IMR-90 (cell line): ENCODE measurements at regions of chrX and their contacts with region 1.

Region 1: DNA sequence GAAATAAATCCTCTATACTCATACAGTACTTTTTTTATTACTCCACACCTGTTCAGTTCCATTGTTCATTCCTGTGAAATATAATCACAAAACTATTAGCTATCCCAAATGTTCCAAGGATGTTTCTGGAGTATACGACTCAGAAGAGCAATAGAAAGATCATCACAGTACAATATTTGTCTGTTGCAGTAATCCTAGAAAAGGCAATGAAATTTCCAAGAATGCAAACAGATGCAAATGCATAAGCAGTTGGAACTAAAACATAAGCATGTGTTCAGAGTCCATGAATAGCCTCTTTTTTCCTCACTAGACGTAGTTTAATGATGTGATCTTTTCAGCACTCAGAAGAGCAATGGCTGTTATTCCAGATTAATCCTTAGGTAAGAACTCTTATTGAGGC is 55.2 kb downstream of the RTL3 start:
- DNase-seq: no peak
- ATAC-seq: no peak
- H3K4me3 ChIP-seq: no peak overlapping the region
- H3K27ac ChIP-seq: no peak overlapping the region
- H3K4me1 ChIP-seq: no peaks in the 10 kb centered on the region
- H3K27me3 ChIP-seq: no peaks in the 10 kb centered on the region
- CTCF ChIP-seq: no peak
- POLR2A ChIP-seq: no peak
- RAD21 ChIP-seq: no peak

Region 2: GRCh38 chrX:78665342-78665741 is 61.4 kb after region 1 on chrX:
- CTCF ChIA-PET with region 1: no interaction called
- POLR2A ChIA-PET with region 1: no interaction called
- dilution Hi-C with region 1: no loop called
- in situ Hi-C with region 1: no loop called
- intact Hi-C with region 1: loop called (anchors 10 kb)
- DNase-seq: no peak
- ATAC-seq: no peak
- H3K4me3 ChIP-seq: no peak overlapping the region
- H3K27ac ChIP-seq: no peak overlapping the region
- H3K4me1 ChIP-seq: no peaks in the 10 kb centered on the region; the same call in 1 of the 2 replicates
- H3K27me3 ChIP-seq: no peaks in the 10 kb centered on the region
- CTCF ChIP-seq: no peak
- POLR2A ChIP-seq: no peak
- RAD21 ChIP-seq: no peak